ENCODE measurements at regions of chr4 and their contacts with region 1.

Region 1: GRCh38 chr4:24988776-24989175 is 42.0 kb downstream of the LGI2 start:
- DNase-seq: peak; percentile 65
- ATAC-seq: peak; percentile 92
- H3K4me3 ChIP-seq: no peak overlapping the region
- H3K27ac ChIP-seq: no peak overlapping the region
- H3K4me1 ChIP-seq: no peaks in the 10 kb centered on the region
- H3K27me3 ChIP-seq: no peaks in the 10 kb centered on the region
- CTCF ChIP-seq: peak; percentile 66

Region 2: GRCh38 chr4:24488399-24489164 is 500.2 kb before region 1 on chr4:
- CTCF ChIA-PET with region 1: no interaction called
- POLR2A ChIA-PET with region 1: no interaction called
- intact Hi-C with region 1: loop called (anchors 1 kb)
- DNase-seq: peak; percentile 75
- ATAC-seq: peak; percentile 84
- H3K4me3 ChIP-seq: no peak overlapping the region
- H3K27ac ChIP-seq: no peak overlapping the region
- H3K4me1 ChIP-seq: no peaks in the 10 kb centered on the region
- H3K27me3 ChIP-seq: no peaks in the 10 kb centered on the region
- CTCF ChIP-seq: peak; percentile 88

Region 3: GRCh38 chr4:25085671-25086070 is 96.9 kb after region 1 on chr4:
- CTCF ChIA-PET with region 1: no interaction called
- POLR2A ChIA-PET with region 1: no interaction called
- intact Hi-C with region 1: no loop called
- DNase-seq: no peak
- ATAC-seq: no peak
- H3K4me3 ChIP-seq: no peak overlapping the region
- H3K27ac ChIP-seq: no peak overlapping the region
- H3K4me1 ChIP-seq: peaks cover 5% of the 10 kb centered on the region; the same call in 1 of the 2 replicates
- H3K27me3 ChIP-seq: no peaks in the 10 kb centered on the region
- CTCF ChIP-seq: no peak

Region 4: DNA sequence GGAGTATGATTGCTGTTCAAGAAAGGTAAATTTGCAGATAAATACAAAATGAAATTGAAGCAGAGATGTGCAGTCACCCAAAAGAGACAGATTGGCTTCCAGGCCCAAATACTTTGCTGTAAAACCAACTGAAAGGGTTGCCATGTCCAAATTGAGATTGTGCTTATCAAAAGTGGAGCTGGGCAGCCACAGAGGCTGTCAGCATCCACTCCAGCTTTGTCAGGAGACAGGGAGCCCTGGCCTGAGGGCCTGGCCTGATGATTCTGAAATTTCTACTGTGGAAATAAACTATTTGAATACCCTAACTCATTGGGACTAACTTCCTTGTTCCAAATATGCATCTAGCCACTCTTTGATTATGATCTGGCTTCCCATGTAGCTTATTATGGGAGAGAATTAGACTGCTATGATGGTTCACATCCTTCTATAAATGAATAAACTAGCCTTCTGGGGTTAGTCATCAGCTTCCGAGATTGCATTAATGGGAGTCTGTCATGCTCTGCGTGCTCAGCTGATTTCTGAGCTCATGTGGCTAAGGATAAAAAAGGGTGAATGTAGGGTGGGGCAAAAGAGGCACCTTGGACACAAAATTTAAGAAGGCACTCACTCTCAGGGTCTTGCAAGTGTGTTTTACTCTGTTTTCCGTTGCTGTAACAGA is 715.1 kb after region 1 on chr4:
- CTCF ChIA-PET with region 1: no interaction called
- POLR2A ChIA-PET with region 1: no interaction called
- intact Hi-C with region 1: no loop called
- DNase-seq: peak; percentile 52
- ATAC-seq: peak; percentile 83
- H3K4me3 ChIP-seq: no peak overlapping the region
- H3K27ac ChIP-seq: peak overlapping the region; percentile 55
- H3K4me1 ChIP-seq: peaks cover 5% of the 10 kb centered on the region
- H3K27me3 ChIP-seq: no peaks in the 10 kb centered on the region
- CTCF ChIP-seq: no peak

Measured in PC-3 (cell line).